Mammary epithelial cell (primary cell): ENCODE measurements at regions of chr12 and their contacts with region 1.

Region 1: GRCh38 chr12:22544038-22544979 is at the start of gene C2CD5:
- DNase-seq: peak; percentile 96
- H3K4me3 ChIP-seq: peak within 1 kb of the TSS; percentile 71 to 93 (median 74)
- H3K27ac ChIP-seq: peak within 1 kb of the TSS; percentile 63
- H3K4me1 ChIP-seq: peaks cover 14% of the 10 kb centered on the region
- H3K27me3 ChIP-seq: no peaks in the 10 kb centered on the region
- CTCF ChIP-seq: peak; percentile 25 to 42
- total RNA-seq, gene C2CD5: 13.8 to 18.8 TPM

Region 2: DNA sequence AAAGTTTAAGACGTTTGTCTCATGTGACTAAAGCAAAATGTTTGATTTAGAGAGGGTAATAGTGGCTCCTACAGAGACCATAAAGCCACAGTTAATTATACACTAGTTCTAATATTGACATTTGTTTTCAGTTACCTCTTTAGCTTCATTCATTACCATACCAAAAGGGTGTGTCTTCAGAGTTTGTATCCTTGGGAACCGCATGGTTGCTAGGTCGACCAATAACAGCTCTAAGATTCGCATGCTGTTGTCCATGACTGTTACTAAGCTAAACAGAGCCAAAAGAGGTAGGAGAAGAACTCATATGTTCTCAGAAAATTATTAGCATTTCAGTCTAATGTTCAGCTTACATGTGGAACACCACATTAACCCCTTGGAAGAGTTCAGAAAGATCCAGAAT is 44.5 kb after region 1 on chr12:
- CTCF ChIA-PET with region 1: no interaction called
- dilution Hi-C with region 1: no loop called
- in situ Hi-C with region 1: no loop called
- intact Hi-C with region 1: loop called (anchors 1 kb)
- DNase-seq: peak; percentile 13
- H3K4me3 ChIP-seq: no peak overlapping the region
- H3K27ac ChIP-seq: no peak overlapping the region
- H3K4me1 ChIP-seq: no peaks in the 10 kb centered on the region
- H3K27me3 ChIP-seq: no peaks in the 10 kb centered on the region
- CTCF ChIP-seq: no peak

Region 3: GRCh38 chr12:22631863-22632463 is 87.7 kb after region 1 on chr12:
- CTCF ChIA-PET with region 1: no interaction called
- dilution Hi-C with region 1: loop called (anchors 10 kb)
- in situ Hi-C with region 1: loop called (anchors 10 to 25 kb)
- intact Hi-C with region 1: loop called (anchors 1 kb)
- DNase-seq: no peak
- H3K4me3 ChIP-seq: no peak overlapping the region
- H3K27ac ChIP-seq: no peak overlapping the region
- H3K4me1 ChIP-seq: peaks cover 18% of the 10 kb centered on the region
- H3K27me3 ChIP-seq: no peaks in the 10 kb centered on the region
- CTCF ChIP-seq: peak; percentile 55 to 62

Region 4: GRCh38 chr12:22974865-22975264 is 430.6 kb after region 1 on chr12:
- CTCF ChIA-PET with region 1: no interaction called
- dilution Hi-C with region 1: no loop called
- in situ Hi-C with region 1: no loop called
- intact Hi-C with region 1: loop called (anchors 5 kb)
- DNase-seq: peak; percentile 79
- H3K4me3 ChIP-seq: no peak overlapping the region
- H3K27ac ChIP-seq: peak overlapping the region; percentile 55
- H3K4me1 ChIP-seq: peaks cover 36% of the 10 kb centered on the region
- H3K27me3 ChIP-seq: no peaks in the 10 kb centered on the region
- CTCF ChIP-seq: no peak